Mammary epithelial cell (primary cell): ENCODE measurements at regions of chrX and their contacts with region 1.

Region 1: DNA sequence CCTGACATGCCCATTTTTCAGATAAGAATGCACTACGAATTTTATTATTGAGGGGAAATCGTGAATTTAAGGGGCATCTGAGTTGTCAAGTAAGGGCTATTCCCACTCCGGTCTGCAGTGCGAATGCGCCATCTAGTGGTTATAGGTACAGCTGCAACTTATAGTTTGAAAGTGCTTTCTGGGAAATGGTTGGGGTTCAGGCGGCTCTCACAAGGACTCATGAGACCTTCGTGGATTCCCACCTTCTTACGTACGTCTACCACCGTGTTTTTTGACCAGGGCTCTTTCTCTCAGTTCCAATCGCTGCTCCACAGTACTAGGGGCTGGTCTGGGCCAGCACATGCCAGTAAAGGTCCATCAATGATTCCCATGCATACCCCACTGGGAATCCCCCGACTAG is 12.3 kb downstream of the MSL3 start:
- DNase-seq: peak; percentile 31
- H3K4me3 ChIP-seq: no peak overlapping the region
- H3K27ac ChIP-seq: no peak overlapping the region
- H3K4me1 ChIP-seq: no peaks in the 10 kb centered on the region
- H3K27me3 ChIP-seq: no peaks in the 10 kb centered on the region
- CTCF ChIP-seq: peak; percentile 92

Region 2: GRCh38 chrX:10847333-10847732 is 923.0 kb before region 1 on chrX:
- CTCF ChIA-PET with region 1: no interaction called
- dilution Hi-C with region 1: no loop called
- in situ Hi-C with region 1: no loop called
- intact Hi-C with region 1: no loop called
- DNase-seq: no peak
- H3K4me3 ChIP-seq: no peak overlapping the region
- H3K27ac ChIP-seq: no peak overlapping the region
- H3K4me1 ChIP-seq: no peaks in the 10 kb centered on the region
- H3K27me3 ChIP-seq: peaks cover 2% of the 10 kb centered on the region
- CTCF ChIP-seq: no peak

Region 3: DNA sequence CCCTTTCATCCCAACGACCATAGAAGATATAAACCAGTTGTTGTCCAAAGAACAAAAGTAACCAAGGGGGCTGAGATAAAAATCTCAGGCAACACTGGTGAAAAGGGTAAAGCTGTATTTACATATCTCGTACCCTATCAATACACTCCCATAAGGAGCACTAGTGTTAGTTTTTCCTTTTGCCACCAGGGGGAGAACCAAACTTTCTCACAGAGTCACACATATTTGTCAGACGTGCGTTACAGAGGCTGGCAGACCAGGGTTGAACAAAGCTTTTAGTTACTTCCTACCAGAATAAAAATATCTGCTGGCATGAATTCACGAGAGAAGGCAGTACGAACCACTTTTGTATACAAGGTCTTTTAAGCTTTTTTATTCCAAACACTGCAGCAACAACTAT is 388.9 kb before region 1 on chrX:
- CTCF ChIA-PET with region 1: no interaction called
- dilution Hi-C with region 1: no loop called
- in situ Hi-C with region 1: no loop called
- intact Hi-C with region 1: loop called (anchors 10 kb)
- DNase-seq: peak; percentile 38
- H3K4me3 ChIP-seq: no peak overlapping the region
- H3K27ac ChIP-seq: no peak overlapping the region
- H3K4me1 ChIP-seq: no peaks in the 10 kb centered on the region
- H3K27me3 ChIP-seq: no peaks in the 10 kb centered on the region
- CTCF ChIP-seq: peak; percentile 53 to 62

Region 4: DNA sequence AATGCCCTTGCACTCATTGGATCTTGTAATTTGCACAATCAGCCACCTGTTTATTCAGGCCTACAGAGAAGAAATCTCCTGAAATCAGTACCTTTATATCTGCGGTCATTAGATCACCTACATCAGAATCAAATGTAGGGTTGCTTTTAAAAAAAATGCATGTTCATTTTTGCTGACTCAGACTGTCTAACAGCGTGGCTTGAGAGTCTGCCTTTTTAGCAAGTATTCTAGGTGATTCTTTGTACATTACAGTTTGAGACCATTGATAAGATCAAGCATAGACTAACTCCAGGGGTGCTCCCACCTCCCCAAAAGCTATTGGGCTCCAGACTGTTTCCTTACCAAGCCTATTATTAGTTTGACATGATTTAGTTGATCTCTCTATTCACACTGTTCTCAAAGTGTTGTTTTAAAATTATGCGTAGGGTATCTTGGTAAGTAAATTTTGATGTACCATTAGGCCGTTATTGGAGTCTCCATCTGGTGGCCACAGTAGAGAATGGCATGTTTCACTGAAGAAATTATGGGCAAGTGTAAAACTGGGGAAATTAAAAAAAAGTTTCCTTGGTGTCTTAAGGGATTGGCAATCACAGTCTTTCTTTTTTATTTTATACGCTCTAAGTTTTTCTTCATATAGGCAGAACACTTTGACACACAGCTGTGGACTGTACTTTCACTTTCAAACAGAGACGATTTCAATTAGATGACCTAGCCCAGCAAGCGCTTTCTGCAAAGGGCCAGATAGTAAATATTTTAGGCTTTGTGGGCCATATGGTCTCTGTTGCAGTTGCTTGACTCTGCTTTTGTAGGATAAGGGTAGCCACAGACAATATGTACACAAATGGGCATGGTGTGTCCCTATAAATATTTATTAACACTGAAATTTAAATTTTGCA is 46.0 kb before region 1 on chrX:
- CTCF ChIA-PET with region 1: no interaction called
- dilution Hi-C with region 1: no loop called
- in situ Hi-C with region 1: no loop called
- intact Hi-C with region 1: loop called (anchors 1 kb)
- DNase-seq: peak; percentile 14
- H3K4me3 ChIP-seq: no peak overlapping the region
- H3K27ac ChIP-seq: no peak overlapping the region
- H3K4me1 ChIP-seq: no peaks in the 10 kb centered on the region
- H3K27me3 ChIP-seq: no peaks in the 10 kb centered on the region
- CTCF ChIP-seq: peak; percentile 72 to 74

Region 5: GRCh38 chrX:11908371-11908770 is 138.1 kb after region 1 on chrX:
- CTCF ChIA-PET with region 1: no interaction called
- dilution Hi-C with region 1: no loop called
- in situ Hi-C with region 1: no loop called
- intact Hi-C with region 1: loop called (anchors 5 kb)
- DNase-seq: peak; percentile 25
- H3K4me3 ChIP-seq: no peak overlapping the region
- H3K27ac ChIP-seq: no peak overlapping the region
- H3K4me1 ChIP-seq: no peaks in the 10 kb centered on the region
- H3K27me3 ChIP-seq: no peaks in the 10 kb centered on the region
- CTCF ChIP-seq: peak; percentile 63 to 64

Region 6: GRCh38 chrX:12360383-12360782 is 590.1 kb after region 1 on chrX:
- CTCF ChIA-PET with region 1: no interaction called
- dilution Hi-C with region 1: no loop called
- in situ Hi-C with region 1: no loop called
- intact Hi-C with region 1: no loop called
- DNase-seq: peak; percentile 81
- H3K4me3 ChIP-seq: no peak overlapping the region
- H3K27ac ChIP-seq: peak overlapping the region; percentile 66
- H3K4me1 ChIP-seq: peaks cover 20% of the 10 kb centered on the region
- H3K27me3 ChIP-seq: no peaks in the 10 kb centered on the region
- CTCF ChIP-seq: no peak